PC-9 (cell line): ENCODE measurements at regions of chr5 and their contacts with region 1.

Region 1: GRCh38 chr5:141186897-141187512 is at the start of gene PCDHB9:
- DNase-seq: peak in 1 of 2 experiments; percentile 11
- H3K4me3 ChIP-seq: no peak within 1 kb of the TSS
- H3K27ac ChIP-seq: no peak within 1 kb of the TSS
- H3K4me1 ChIP-seq: no peaks in the 10 kb centered on the region
- H3K27me3 ChIP-seq: no peaks in the 10 kb centered on the region
- CTCF ChIP-seq: peak; percentile 65
- total RNA-seq, gene PCDHB9: not detected in 2 replicates

Region 2: DNA sequence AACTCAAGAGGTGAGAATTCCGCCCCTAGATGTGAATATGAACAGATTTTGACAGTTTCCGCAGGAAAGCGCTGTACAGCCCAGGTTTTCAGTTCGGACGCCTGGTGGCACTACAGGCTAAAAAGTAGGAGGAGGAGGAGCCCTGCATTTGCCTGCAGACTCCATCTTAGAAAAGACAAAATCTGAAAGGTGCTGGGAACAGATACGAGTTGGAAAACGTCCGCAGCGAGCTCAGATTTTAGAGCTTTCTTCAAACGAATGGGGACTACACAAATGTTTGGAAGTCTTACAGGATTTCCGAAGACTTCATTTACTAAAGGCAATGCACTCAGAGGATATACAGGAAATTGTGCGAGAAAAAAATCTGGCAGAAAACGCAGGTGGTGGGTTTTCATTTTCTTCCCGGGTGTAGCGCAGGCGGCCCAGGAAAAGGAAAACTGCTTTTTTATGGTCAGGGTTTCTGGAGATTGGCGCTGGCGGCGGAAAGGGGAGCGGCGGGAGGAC is 102.5 kb before region 1 on chr5:
- CTCF ChIA-PET with region 1: no interaction called
- POLR2A ChIA-PET with region 1: no interaction called
- intact Hi-C with region 1: loop called (anchors 10 kb)
- DNase-seq: peak; percentile 39 to 62
- H3K4me3 ChIP-seq: peak overlapping the region; percentile 59
- H3K27ac ChIP-seq: no peak overlapping the region
- H3K4me1 ChIP-seq: no peaks in the 10 kb centered on the region
- H3K27me3 ChIP-seq: no peaks in the 10 kb centered on the region
- CTCF ChIP-seq: peak; percentile 63

Region 3: GRCh38 chr5:141172378-141173204 is 14.4 kb before region 1 on chr5 and contains the start of gene PCDHB7:
- CTCF ChIA-PET with region 1: no interaction called
- POLR2A ChIA-PET with region 1: no interaction called
- intact Hi-C with region 1: no loop called
- DNase-seq: peak in 1 of 2 experiments; percentile 10
- H3K4me3 ChIP-seq: no peak within 1 kb of the TSS
- H3K27ac ChIP-seq: no peak within 1 kb of the TSS
- H3K4me1 ChIP-seq: no peaks in the 10 kb centered on the region
- H3K27me3 ChIP-seq: no peaks in the 10 kb centered on the region
- CTCF ChIP-seq: peak; percentile 59
- total RNA-seq, gene PCDHB7: not detected in 2 replicates

Region 4: DNA sequence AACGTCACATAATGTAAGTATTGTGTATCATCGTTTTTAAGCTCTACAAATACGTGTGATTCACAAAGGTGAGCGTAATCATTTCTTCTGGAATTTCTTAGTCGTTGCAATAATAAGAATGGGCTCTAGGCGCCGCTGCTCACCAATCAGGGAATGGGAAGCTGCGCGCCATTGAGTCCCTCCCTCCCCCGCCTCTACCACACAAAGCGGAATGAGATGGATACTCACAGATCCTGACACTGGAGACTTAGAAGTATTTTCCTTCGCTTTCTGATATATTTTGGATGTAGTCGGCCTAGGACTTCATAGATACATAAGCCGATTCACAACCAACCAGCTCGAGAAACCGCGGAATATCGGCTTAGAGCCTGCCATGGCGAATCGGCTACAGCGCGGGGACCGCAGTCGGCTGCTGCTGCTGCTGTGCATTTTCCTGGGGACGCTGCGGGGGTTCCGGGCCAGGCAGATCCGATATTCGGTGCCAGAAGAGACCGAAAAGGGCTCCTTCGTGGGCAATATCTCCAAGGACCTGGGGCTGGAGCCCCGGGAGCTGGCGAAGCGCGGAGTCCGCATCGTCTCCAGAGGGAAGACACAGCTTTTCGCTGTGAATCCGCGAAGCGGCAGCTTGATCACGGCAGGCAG is 234.0 kb after region 1 on chr5 and contains the start of gene PCDHGA11:
- CTCF ChIA-PET with region 1: interaction called, 12 read pairs
- POLR2A ChIA-PET with region 1: no interaction called
- intact Hi-C with region 1: no loop called
- DNase-seq: peak; percentile 38 to 60
- H3K4me3 ChIP-seq: peak within 1 kb of the TSS; percentile 50
- H3K27ac ChIP-seq: no peak within 1 kb of the TSS
- H3K4me1 ChIP-seq: no peaks in the 10 kb centered on the region
- H3K27me3 ChIP-seq: peaks cover 25% of the 10 kb centered on the region; the same call in 1 of the 2 replicates
- CTCF ChIP-seq: peak; percentile 81
- total RNA-seq, gene PCDHGA11: 0.18 and 0.22 TPM in 2 replicates

Region 5: GRCh38 chr5:141557681-141558136 is 370.7 kb after region 1 on chr5:
- CTCF ChIA-PET with region 1: no interaction called
- POLR2A ChIA-PET with region 1: no interaction called
- intact Hi-C with region 1: no loop called
- DNase-seq: peak; percentile 39 to 56
- H3K4me3 ChIP-seq: no peak overlapping the region
- H3K27ac ChIP-seq: no peak overlapping the region
- H3K4me1 ChIP-seq: 0 out of 2 replicates have a peak, but pooled peaks cover 5% of the 10 kb centered on the region
- H3K27me3 ChIP-seq: no peaks in the 10 kb centered on the region
- CTCF ChIP-seq: peak; percentile 93